Sciatic nerve (tissue), 2 donors: ENCODE measurements at regions of chr22 and their contacts with region 1.

Region 1: DNA sequence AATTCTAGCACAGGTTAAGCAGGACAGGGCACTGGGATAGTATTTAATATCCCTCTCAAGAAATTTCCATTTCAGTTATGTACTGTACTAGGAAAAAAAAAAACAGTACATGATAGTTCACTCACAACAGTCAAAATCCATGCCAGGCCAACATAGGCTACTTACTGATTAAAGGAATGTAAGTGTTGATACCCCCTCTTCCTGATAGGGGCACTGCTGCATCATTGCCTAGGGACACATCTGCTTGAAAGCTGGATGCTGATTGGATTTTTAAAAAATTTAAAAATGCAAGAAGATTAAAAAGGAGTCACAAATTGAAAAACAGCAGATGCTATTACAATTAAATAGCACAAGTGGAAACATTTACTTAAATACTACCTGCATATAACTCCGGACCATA is 43.4 kb downstream of the APOL5 start:
- DNase-seq: no peak
- ATAC-seq: peak; percentile 55

Region 2: GRCh38 chr22:35900483-35901168 is 139.6 kb after region 1 on chr22:
- intact Hi-C with region 1: no loop called
- DNase-seq: no peak
- ATAC-seq: peak; percentile 30

Region 3: DNA sequence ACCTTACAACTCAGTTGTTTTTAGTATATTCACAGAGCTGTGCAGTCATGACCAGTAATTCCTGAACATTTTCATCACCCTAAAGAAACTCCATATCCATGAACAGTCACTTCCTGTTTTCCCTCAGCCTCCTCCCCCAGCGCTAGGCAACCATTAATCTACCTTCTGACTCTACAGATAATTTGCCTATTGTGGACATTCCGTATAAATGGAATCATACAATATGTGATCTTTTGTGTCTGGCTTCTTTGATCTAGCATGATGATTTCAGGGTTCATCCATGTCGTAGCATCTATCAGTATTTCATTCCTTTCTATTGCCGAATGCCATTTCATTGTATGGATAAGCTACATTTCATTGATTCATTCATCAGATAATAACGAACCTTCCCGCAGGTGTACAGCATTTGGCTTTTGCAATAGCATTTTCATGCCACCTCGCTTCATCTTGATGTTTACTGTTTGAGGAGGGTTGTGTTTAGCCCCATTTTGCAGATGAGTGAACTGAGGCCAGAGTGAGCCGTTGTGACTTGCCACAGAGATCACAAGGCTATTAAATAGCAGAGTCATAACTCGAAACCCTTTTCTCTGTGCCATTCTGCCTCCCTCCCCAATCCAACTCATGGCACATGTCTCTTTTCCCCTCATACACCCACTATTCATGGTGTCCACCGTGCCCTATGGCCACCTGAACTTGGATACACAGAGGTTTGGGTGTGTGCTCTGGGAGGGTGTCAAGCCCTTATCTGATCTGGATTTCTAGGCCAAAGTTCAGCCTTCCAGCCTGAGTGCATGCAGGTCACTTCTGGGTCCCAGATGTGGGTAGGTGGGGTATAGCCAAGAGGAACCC is 637.8 kb after region 1 on chr22:
- intact Hi-C with region 1: loop called (anchors 10 kb)
- DNase-seq: no peak
- ATAC-seq: no peak